ENCODE measurements at regions of chr2 and their contacts with region 1.

Region 1: GRCh38 chr2:67733517-67733916 is 329.3 kb downstream of the C1D start:
- DNase-seq: peak; percentile 30 to 54 (median 51)
- H3K4me3 ChIP-seq: no peak overlapping the region
- H3K27ac ChIP-seq: no peak overlapping the region
- H3K4me1 ChIP-seq: no peaks in the 10 kb centered on the region
- H3K27me3 ChIP-seq: peaks cover 0 to 5% (median 0%) of the 10 kb centered on the region in 5 experiments

Region 2: DNA sequence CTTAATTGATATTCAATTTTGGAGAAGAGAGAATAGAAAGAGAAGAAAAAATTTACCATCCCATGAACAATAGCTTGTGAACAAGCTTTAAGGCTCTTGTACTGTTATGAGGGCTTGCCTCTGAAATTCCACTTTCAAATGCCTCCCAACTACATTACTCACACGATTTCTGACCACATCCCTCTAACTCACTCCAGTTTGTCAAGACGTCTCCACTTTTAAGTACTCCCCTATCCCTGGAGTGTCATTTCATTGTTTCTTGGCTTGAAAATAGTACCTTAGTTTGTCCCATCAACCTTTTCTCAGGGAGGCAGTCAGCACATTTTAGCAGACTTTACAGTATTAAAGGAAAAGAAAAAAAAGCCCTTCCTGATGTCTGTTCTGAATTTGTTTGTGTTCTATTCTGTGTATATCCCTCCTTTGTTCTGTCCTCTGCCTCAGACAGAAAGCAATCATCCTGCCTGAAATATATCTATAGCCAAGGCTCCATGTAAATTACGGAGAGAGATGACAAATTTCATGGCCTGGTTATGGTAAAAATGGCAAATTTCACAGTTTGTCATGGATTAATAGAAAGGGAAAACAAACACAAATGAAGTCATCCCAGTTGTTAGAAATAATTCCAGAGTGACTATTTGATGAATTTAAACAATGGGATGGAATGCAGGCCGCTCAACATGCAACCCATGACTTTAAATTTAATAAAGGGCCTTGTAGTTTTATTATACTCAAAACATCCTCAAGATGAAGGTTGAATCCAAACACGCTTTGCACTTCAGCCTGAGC is 107.6 kb before region 1 on chr2:
- CTCF ChIA-PET with region 1: no interaction called
- POLR2A ChIA-PET with region 1: no interaction called
- DNase-seq: no peak
- H3K4me3 ChIP-seq: no peak overlapping the region
- H3K27ac ChIP-seq: no peak overlapping the region
- H3K4me1 ChIP-seq: peaks cover 0 to 16% (median 4%) of the 10 kb centered on the region in 4 experiments
- H3K27me3 ChIP-seq: no peaks in the 10 kb centered on the region

Region 3: DNA sequence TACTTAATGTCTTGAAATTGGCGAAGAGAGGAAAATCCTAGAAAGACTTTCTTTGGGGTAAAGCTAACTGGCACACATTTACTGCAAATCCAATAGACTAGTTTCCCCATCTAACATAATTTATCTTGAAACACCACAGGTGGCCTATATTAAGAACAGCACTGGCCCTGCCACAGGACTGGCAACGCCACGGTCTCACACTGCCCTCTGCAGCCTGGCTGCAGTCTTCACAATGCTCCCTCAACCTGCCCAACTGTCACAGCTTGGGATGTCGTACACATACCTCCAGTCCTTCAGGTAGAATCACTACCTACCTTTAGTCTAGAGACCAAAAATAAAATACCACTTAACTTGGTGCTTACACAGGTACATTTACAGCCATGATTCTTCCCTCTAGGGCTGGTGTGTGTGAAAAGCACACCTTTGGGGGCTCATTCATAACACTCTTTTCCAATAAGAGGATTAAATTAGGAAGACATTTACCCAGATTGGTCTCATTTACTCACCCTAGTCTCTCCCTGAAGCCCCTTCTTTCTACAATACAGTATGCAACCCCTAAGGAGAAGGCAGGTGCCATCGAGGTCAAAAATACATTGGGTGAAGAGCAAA is 107.0 kb after region 1 on chr2:
- CTCF ChIA-PET with region 1: interaction called, 36 read pairs
- POLR2A ChIA-PET with region 1: interaction called, 3 read pairs
- DNase-seq: peak; percentile 60 to 78 (median 78)
- H3K4me3 ChIP-seq: no peak overlapping the region
- H3K27ac ChIP-seq: no peak overlapping the region
- H3K4me1 ChIP-seq: no peaks in the 10 kb centered on the region
- H3K27me3 ChIP-seq: peaks cover 0 to 21% (median 2%) of the 10 kb centered on the region in 5 experiments

Region 4: GRCh38 chr2:68031542-68032160 is 298.1 kb after region 1 on chr2:
- CTCF ChIA-PET with region 1: interaction called, 53 read pairs
- POLR2A ChIA-PET with region 1: no interaction called
- DNase-seq: peak; percentile 48 to 77 (median 69)
- H3K4me3 ChIP-seq: no peak overlapping the region
- H3K27ac ChIP-seq: no peak overlapping the region
- H3K4me1 ChIP-seq: no peaks in the 10 kb centered on the region
- H3K27me3 ChIP-seq: peaks cover 0 to 13% (median 5%) of the 10 kb centered on the region in 5 experiments

Measured in common myeloid progenitor, CD34-positive (primary cell).